Mammary epithelial cell (primary cell): ENCODE measurements at regions of chrX and their contacts with region 1.

Region 1: GRCh38 chrX:77389891-77390290 is 57.3 kb upstream of the FGF16 start:
- DNase-seq: peak; percentile 52
- H3K4me3 ChIP-seq: no peak overlapping the region
- H3K27ac ChIP-seq: no peak overlapping the region
- H3K4me1 ChIP-seq: no peaks in the 10 kb centered on the region
- H3K27me3 ChIP-seq: no peaks in the 10 kb centered on the region
- CTCF ChIP-seq: no peak

Region 2: DNA sequence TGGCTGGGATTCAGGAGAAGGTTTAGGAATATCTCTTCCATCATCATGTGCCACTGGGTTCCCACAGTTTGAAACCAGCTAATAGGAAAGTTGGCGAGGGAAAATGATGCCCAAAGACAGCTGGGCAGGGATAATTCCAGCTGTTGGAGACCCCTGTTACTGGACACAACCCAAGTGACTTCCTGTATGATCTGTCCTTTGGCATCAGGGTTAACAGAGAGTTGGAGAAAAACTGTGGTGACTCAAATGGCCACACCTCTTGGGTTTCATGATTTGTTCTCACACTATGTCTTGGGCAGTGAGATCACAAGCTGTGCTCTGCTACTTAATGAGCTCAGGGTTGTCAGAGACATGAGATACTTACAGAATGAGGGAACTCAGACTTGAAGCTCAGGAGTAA is 61.1 kb after region 1 on chrX:
- CTCF ChIA-PET with region 1: no interaction called
- dilution Hi-C with region 1: no loop called
- in situ Hi-C with region 1: no loop called
- intact Hi-C with region 1: loop called (anchors 2 kb)
- DNase-seq: peak; percentile 76
- H3K4me3 ChIP-seq: no peak overlapping the region
- H3K27ac ChIP-seq: no peak overlapping the region
- H3K4me1 ChIP-seq: peaks cover 12% of the 10 kb centered on the region
- H3K27me3 ChIP-seq: no peaks in the 10 kb centered on the region
- CTCF ChIP-seq: no peak